ENCODE measurements at regions of chr5 and their contacts with region 1.

Region 1: DNA sequence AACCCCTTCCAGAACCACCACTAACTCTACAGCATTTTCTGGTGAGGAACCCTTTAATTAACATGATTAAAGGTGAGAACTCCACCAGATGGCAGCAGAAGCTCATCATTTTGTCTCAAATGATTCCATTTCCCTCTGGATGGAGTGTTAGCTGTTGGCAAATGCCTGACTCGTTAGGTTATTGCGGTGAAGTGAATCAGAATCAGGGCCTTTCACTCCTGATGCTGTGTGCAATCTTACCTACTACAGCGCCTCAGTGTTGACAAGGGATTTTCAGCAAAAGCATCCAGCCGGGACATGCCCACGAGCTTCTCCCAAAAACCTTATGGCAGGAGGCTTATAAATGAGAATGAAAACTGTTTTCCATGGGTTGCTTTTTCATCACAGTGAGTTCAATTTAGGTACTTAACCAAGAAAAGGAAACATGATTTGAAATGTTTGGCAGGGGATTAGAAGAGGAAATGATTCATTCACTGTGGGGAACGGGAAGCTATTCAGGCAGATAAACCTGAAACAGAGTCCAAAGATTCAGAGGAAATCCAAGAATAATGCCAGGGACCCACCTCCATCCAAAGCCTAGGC is 48.0 kb upstream of the CAST start:
- DNase-seq: peak; percentile 43 to 53 (median 50)
- H3K4me3 ChIP-seq: no peak overlapping the region
- H3K4me3 Mint-ChIP-seq: no peak overlapping the region
- H3K27ac ChIP-seq: no peak overlapping the region
- H3K27ac Mint-ChIP-seq: peak overlapping the region in 1 of 7 donors; percentile 54
- H3K4me1 ChIP-seq: peaks cover 4% of the 10 kb centered on the region
- H3K4me1 Mint-ChIP-seq: peaks cover 2 to 5% (median 4%) of the 10 kb centered on the region in 4 donors
- H3K27me3 ChIP-seq: peaks cover 4% of the 10 kb centered on the region
- H3K27me3 Mint-ChIP-seq: peaks cover 5 to 9% of the 10 kb centered on the region in 2 donors

Region 2: GRCh38 chr5:96565582-96566265 is 48.5 kb before region 1 on chr5:
- CTCF ChIA-PET with region 1: no interaction called
- POLR2A ChIA-PET with region 1: no interaction called
- intact Hi-C with region 1: no loop called
- DNase-seq: no peak
- H3K4me3 ChIP-seq: no peak overlapping the region
- H3K4me3 Mint-ChIP-seq: peak overlapping the region in 2 of 8 donors; percentile 37 to 48
- H3K27ac ChIP-seq: no peak overlapping the region
- H3K27ac Mint-ChIP-seq: peak overlapping the region in 2 of 7 donors; percentile 9 to 56
- H3K4me1 ChIP-seq: peaks cover 17% of the 10 kb centered on the region
- H3K4me1 Mint-ChIP-seq: peaks cover 14 to 25% (median 17%) of the 10 kb centered on the region in 4 donors
- H3K27me3 ChIP-seq: no peaks in the 10 kb centered on the region
- H3K27me3 Mint-ChIP-seq: peaks cover 0 to 3% of the 10 kb centered on the region in 2 donors

Region 3: GRCh38 chr5:96629774-96630173 is 15.6 kb after region 1 on chr5:
- CTCF ChIA-PET with region 1: interaction called, 15 read pairs
- POLR2A ChIA-PET with region 1: no interaction called
- intact Hi-C with region 1: no loop called
- DNase-seq: no peak
- H3K4me3 ChIP-seq: no peak overlapping the region
- H3K4me3 Mint-ChIP-seq: no peak overlapping the region
- H3K27ac ChIP-seq: no peak overlapping the region
- H3K27ac Mint-ChIP-seq: peak overlapping the region in 1 of 7 donors; percentile 29
- H3K4me1 ChIP-seq: no peaks in the 10 kb centered on the region
- H3K4me1 Mint-ChIP-seq: peaks cover 11 to 25% (median 15%) of the 10 kb centered on the region in 4 donors
- H3K27me3 ChIP-seq: no peaks in the 10 kb centered on the region
- H3K27me3 Mint-ChIP-seq: peaks cover 0 to 3% of the 10 kb centered on the region in 2 donors

Region 4: DNA sequence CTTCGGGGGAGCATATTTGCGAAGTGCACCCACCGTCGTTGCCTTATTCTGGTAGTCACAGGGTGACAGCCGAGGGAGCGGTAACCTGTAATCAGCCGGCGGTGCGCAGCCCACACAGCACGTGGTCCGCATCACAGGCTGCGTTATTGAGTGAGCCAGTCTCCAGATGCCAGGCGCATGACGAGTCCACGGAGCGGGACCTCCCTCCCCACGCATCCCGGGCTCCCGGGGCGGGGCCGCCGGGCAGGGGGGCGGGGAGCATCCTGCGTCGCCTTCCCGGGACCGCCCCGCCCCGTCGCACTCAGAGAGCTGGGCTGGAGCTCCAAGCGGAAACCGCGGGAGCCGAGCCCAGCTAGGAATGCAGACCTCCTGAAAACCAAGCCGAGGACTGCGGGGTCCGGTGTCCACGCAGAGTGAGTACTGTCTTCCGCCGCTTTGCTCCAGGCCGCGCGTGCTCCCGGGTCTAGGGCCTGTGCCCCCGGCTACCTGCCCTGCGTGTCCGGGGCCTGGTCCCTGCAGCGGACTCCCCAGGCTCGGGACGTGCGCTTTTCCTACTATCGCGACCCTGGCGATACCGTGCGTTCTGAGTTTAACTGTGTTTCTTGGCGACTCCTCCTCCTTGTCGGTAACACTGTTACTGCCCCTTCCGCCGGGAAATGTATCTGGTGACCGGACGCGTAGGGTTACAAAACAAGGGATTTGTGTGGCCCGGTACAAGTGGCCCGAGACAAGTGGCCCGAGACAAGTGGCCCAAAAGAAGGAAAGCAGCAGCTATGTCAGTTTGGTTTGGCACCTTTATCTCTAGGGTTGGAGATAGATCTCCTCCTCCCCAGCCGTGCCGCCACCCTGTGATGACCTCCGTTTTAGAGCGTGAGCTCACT is 88.5 kb after region 1 on chr5:
- CTCF ChIA-PET with region 1: interaction called, 10 read pairs
- POLR2A ChIA-PET with region 1: no interaction called
- intact Hi-C with region 1: no loop called
- DNase-seq: peak; percentile 75 to 93 (median 80)
- H3K4me3 ChIP-seq: peak overlapping the region; percentile 13 to 59
- H3K4me3 Mint-ChIP-seq: peak overlapping the region; percentile 87 to 97 (median 94)
- H3K27ac ChIP-seq: peak overlapping the region; percentile 92
- H3K27ac Mint-ChIP-seq: peak overlapping the region; percentile 97 to 99 (median 98)
- H3K4me1 ChIP-seq: peaks cover 23% of the 10 kb centered on the region
- H3K4me1 Mint-ChIP-seq: peaks cover 30 to 64% (median 47%) of the 10 kb centered on the region in 4 donors
- H3K27me3 ChIP-seq: no peaks in the 10 kb centered on the region
- H3K27me3 Mint-ChIP-seq: no peaks in the 10 kb centered on the region

Region 5: DNA sequence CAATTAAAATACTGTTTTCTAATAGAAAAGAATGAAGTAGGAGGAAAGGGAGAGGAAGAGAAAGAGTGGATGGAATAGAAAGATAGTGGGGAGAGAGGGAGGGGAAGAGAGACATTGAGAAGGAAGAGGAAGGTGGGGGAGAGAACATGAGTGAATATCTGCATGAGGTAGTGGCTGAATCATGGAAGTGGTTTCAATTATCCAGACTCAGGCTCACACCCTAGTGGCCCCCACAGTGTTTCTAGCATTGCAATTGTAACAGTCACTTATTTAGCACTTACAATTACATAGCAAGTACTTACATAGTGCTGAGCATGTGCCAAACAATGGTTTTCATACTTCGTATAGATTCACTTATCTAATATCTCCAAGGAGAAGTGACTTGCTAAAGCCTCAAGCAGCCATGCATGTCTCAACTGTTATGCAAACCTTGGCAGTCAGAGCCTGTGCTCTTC is 120.7 kb after region 1 on chr5:
- CTCF ChIA-PET with region 1: interaction called, 52 read pairs
- POLR2A ChIA-PET with region 1: no interaction called
- intact Hi-C with region 1: no loop called
- DNase-seq: no peak
- H3K4me3 ChIP-seq: no peak overlapping the region
- H3K4me3 Mint-ChIP-seq: no peak overlapping the region
- H3K27ac ChIP-seq: no peak overlapping the region
- H3K27ac Mint-ChIP-seq: peak overlapping the region; percentile 1 to 88 (median 44)
- H3K4me1 ChIP-seq: no peaks in the 10 kb centered on the region
- H3K4me1 Mint-ChIP-seq: peaks cover 7 to 15% (median 13%) of the 10 kb centered on the region in 4 donors
- H3K27me3 ChIP-seq: no peaks in the 10 kb centered on the region
- H3K27me3 Mint-ChIP-seq: no peaks in the 10 kb centered on the region

Region 6: DNA sequence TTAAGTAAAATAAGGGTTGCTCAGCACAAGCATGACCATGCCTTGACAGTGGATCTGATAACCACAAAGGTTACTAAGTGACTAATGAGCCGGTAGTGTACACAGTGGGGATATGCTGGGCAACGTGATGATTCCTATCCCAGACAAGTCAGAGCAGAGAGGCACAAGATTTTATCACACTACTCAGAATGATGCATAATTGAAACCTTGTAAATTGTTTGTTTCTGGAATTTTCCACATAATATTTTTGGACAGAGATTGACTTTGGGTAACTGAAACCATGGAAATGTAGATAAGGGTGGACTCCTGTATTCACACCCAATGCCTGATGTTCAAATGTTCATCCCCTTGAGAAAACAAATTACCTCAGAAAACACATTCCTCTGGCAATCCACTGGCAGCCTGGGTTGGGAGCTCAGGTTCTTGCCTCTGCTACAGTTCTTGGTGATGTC is 209.7 kb after region 1 on chr5:
- CTCF ChIA-PET with region 1: interaction called, 5 read pairs
- POLR2A ChIA-PET with region 1: no interaction called
- intact Hi-C with region 1: loop called (anchors 1 kb)
- DNase-seq: peak in 1 of 5 donors; percentile 35
- H3K4me3 ChIP-seq: no peak overlapping the region
- H3K4me3 Mint-ChIP-seq: peak overlapping the region in 1 of 8 donors; percentile 4
- H3K27ac ChIP-seq: no peak overlapping the region
- H3K27ac Mint-ChIP-seq: peak overlapping the region in 3 of 7 donors; percentile 14 to 83 (median 49)
- H3K4me1 ChIP-seq: peaks cover 28% of the 10 kb centered on the region
- H3K4me1 Mint-ChIP-seq: peaks cover 31 to 46% (median 38%) of the 10 kb centered on the region in 4 donors
- H3K27me3 ChIP-seq: no peaks in the 10 kb centered on the region
- H3K27me3 Mint-ChIP-seq: peaks cover 0 to 2% of the 10 kb centered on the region in 2 donors

Measured in CD4-positive, alpha-beta memory T cell (primary cell).